ENCODE measurements at regions of chr5 and their contacts with region 1.

Region 1: GRCh38 chr5:173293817-173294672 is 34.2 kb downstream of the STC2 start:
- DNase-seq: peak; percentile 68 to 82 (median 81)
- H3K4me3 ChIP-seq: peak overlapping the region in 1 of 7 experiments; percentile 13
- H3K27ac ChIP-seq: no peak overlapping the region
- H3K4me1 ChIP-seq: peaks cover 0 to 6% (median 2%) of the 10 kb centered on the region in 4 experiments
- H3K27me3 ChIP-seq: peaks cover 6 to 90% (median 27%) of the 10 kb centered on the region in 5 experiments

Region 2: GRCh38 chr5:173304591-173304988 is 10.5 kb after region 1 on chr5:
- CTCF ChIA-PET with region 1: interaction called, 13 read pairs
- POLR2A ChIA-PET with region 1: no interaction called
- DNase-seq: no peak
- H3K4me3 ChIP-seq: no peak overlapping the region
- H3K27ac ChIP-seq: no peak overlapping the region
- H3K4me1 ChIP-seq: no peaks in the 10 kb centered on the region
- H3K27me3 ChIP-seq: peaks cover 0 to 43% (median 19%) of the 10 kb centered on the region in 5 experiments

Region 3: DNA sequence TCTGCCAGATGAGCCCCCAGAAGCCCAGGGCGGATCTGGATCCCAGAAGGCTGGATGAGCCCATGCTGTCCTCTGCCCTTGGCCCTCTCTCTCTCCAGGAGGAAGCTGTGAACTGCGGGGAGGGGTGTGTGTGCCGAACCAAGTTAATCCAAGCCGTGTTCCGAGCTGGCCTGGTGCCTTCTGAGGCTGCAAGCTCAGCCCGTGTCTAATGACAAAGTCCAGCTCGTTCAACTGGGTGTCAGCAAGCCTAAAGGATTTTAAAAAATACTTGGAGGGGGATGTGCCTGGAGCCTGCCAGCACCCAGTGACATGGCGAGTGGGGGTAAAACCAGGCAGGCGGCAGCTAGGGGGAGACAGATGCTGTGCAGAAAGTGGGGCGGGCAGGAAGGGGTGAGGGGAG is 26.2 kb after region 1 on chr5:
- CTCF ChIA-PET with region 1: interaction called, 10 read pairs
- POLR2A ChIA-PET with region 1: no interaction called
- DNase-seq: peak in 1 of 3 donors; percentile 15
- H3K4me3 ChIP-seq: no peak overlapping the region
- H3K27ac ChIP-seq: no peak overlapping the region
- H3K4me1 ChIP-seq: peaks cover 0 to 20% (median 2%) of the 10 kb centered on the region in 4 experiments
- H3K27me3 ChIP-seq: peaks cover 0 to 88% (median 19%) of the 10 kb centered on the region in 5 experiments

Region 4: DNA sequence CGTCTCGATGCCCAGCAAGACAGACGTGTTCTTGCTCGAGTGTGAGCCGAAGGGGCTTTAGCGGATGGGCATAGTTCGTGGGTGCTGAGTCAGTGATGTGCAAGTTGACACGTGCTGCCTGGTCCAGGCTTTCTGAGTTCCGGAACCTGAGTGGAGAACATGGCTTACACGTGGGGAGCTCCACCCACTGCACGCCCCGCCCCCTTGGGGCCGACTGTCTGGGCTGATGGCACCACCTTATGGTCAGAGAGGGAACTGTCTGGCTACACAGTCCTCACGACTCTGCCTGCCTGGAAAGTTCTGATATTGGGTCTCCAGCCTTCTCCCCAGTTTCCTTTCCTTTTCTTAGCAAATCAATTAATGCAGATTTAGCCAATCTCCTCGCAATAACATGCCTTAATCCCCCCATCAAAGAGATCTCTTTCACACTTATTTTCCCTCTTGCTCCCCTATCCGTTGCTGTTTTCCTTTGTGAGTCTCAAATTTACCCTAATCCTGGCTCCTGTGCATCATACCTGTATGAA is 38.0 kb after region 1 on chr5:
- CTCF ChIA-PET with region 1: interaction called, 105 read pairs
- POLR2A ChIA-PET with region 1: no interaction called
- DNase-seq: peak; percentile 88 to 92 (median 91)
- H3K4me3 ChIP-seq: no peak overlapping the region
- H3K27ac ChIP-seq: no peak overlapping the region
- H3K4me1 ChIP-seq: peaks cover 0 to 31% (median 24%) of the 10 kb centered on the region in 4 experiments
- H3K27me3 ChIP-seq: peaks cover 0 to 78% (median 35%) of the 10 kb centered on the region in 5 experiments